ENCODE measurements at regions of chr17 and their contacts with region 1.

Region 1: DNA sequence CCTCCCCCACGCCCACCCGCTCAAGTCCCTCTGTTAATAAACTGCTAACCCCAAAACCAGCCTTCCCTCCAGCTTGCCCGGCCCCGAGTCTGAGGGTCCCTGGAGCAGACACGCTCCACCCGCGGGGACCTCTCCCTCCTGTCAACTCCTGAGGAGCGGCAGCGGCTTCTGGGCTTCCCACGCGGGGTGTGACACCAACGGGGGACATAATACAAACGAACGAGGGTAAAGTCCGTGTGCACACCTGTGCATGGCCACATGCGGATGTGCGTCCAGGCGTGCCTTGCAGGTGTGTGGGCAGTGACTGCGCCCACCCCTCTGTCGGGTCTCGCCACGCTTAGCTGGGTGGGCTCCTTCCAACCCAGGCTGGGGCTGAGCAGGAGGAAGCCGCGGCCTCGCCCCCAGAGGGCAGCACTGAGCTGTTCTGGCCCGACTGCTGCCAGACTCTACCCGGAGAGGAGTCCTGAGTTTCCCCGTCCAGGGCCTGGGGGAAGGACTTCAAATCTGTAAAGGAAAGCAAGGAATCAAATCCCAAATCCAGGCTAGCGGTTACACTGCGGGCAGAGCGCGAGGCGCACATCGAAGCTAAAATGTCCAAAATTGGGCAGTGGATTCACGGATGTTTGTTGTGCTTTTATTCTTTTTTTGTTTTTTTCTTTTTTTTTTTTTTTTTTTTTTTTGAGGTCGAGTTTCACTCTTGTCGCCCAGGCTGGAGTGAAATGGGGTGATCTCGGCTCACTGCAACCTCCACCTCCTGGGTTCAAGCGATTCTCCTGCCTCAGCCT is 24.2 kb upstream of the KRT17 start:
- DNase-seq: peak; percentile 84
- H3K4me3 ChIP-seq: peak overlapping the region; percentile 55
- H3K27ac ChIP-seq: no peak overlapping the region
- H3K4me1 ChIP-seq: peaks cover 14% of the 10 kb centered on the region
- H3K27me3 ChIP-seq: peaks cover 6% of the 10 kb centered on the region
- CTCF ChIP-seq: peak; percentile 95

Region 2: GRCh38 chr17:41579484-41580243 is 68.9 kb before region 1 on chr17:
- intact Hi-C with region 1: loop called (anchors 10 kb)
- DNase-seq: peak; percentile 59
- H3K4me3 ChIP-seq: no peak overlapping the region
- H3K27ac ChIP-seq: no peak overlapping the region
- H3K4me1 ChIP-seq: no peaks in the 10 kb centered on the region
- H3K27me3 ChIP-seq: peaks cover 96% of the 10 kb centered on the region
- CTCF ChIP-seq: peak; percentile 77

Measured in left ventricle myocardium inferior (tissue), 1 donor.